ENCODE measurements at regions of chr12 and their contacts with region 1.

Region 1: DNA sequence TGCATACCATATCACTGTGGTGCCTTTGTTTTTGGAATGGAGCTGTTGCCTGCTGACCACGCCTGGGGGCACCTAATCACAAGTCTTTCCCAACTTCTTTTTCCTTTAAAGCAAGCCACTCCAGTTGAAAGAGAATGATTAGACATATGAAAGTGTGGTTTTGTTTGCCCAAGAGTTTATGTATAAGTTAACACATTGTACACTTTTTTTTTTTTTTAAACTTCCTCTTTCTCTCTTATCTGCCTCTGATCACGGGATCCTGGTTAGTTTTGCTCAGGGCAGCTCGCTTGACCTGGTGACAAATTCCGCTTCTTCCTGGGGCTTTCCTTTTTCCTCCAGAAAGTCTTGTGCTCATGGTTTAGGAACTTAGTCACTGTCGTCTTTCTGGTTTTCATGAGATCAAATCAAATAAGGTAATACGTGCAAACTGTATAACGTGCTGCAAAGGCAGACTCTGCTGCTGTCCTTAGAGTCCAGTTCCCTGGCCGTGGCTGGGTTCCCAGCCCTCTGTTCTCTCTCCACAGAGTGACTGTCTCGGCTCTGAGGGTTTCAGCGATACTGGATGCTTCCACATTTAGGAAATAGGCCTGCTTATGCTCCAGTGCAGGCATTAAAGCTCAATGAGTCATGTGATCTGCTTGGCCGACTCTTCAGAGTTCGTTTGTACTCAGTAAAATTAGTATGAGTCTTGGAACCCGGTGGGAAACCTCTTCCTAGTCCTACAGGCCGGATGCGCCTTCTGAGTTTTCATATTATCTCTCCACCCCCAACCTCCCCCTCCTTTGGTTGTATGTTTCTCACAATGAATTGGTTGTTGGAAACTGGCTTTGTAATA is 15.2 kb downstream of the RASSF3 start:
- DNase-seq: peak; percentile 58 to 70
- H3K4me3 ChIP-seq: peak overlapping the region; percentile 13
- H3K4me3 Mint-ChIP-seq: peak overlapping the region; percentile 68
- H3K27ac Mint-ChIP-seq: peak overlapping the region; percentile 82
- H3K4me1 ChIP-seq: peaks cover 19% of the 10 kb centered on the region
- H3K4me1 Mint-ChIP-seq: peaks cover 15% of the 10 kb centered on the region
- H3K27me3 ChIP-seq: no peaks in the 10 kb centered on the region
- H3K27me3 Mint-ChIP-seq: no peaks in the 10 kb centered on the region
- CTCF ChIP-seq: no peak

Region 2: GRCh38 chr12:64451687-64452558 is 173.5 kb before region 1 on chr12 and contains the start of gene TBK1:
- CTCF ChIA-PET with region 1: no interaction called
- POLR2A ChIA-PET with region 1: no interaction called
- intact Hi-C with region 1: loop called (anchors 10 kb)
- DNase-seq: peak; percentile 91 to 94
- H3K4me3 ChIP-seq: peak within 1 kb of the TSS; percentile 98
- H3K4me3 Mint-ChIP-seq: peak within 1 kb of the TSS; percentile 83
- H3K27ac Mint-ChIP-seq: peak within 1 kb of the TSS; percentile 86
- H3K4me1 ChIP-seq: peaks cover 4% of the 10 kb centered on the region; the same call in 1 of the 2 replicates
- H3K4me1 Mint-ChIP-seq: peaks cover 15% of the 10 kb centered on the region
- H3K27me3 ChIP-seq: no peaks in the 10 kb centered on the region
- H3K27me3 Mint-ChIP-seq: no peaks in the 10 kb centered on the region
- CTCF ChIP-seq: no peak
- total RNA-seq, gene TBK1: 21.6 and 23.2 TPM in 2 replicates

Region 3: DNA sequence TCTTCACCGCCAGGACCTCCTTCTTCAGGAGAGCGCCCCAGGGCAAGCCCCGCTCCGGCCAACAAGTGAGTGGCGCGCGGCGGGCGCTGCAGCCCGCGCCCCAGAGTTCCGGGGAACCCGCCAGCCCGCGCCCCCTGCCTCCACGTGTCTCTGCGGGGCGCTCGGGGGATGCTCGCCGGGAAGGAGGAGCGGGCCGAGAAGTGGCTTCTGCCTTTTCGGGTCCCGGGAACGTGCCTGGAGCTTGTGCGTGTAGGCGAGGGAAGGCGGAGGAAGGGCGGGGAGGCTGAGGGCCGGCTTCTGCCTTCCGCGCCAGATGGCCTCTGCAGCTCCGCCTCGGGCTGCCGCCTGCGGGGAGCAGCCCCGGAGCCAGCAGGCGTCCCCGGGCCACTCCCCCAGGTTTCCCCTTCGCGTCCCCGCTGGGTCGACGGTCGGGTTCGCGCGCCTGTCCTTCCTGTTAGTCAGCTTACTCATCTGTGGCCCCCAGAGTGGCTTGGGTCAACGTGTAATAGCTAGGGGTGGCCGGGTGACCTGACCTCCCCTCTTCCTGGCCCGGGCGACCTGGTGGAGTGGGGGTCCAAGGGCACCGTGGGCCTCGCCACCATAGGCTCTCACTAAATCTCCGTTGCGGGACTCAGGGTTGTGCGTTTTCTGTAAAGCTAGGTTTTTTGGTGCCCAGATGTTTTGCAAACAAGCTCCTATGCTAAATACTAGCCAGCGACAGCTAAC is 14.6 kb before region 1 on chr12:
- CTCF ChIA-PET with region 1: no interaction called
- POLR2A ChIA-PET with region 1: interaction called, 8 read pairs
- intact Hi-C with region 1: loop called (anchors 1 kb)
- DNase-seq: peak; percentile 67 to 69
- H3K4me3 ChIP-seq: peak overlapping the region; percentile 95
- H3K4me3 Mint-ChIP-seq: peak overlapping the region; percentile 80
- H3K27ac Mint-ChIP-seq: peak overlapping the region; percentile 39
- H3K4me1 ChIP-seq: peaks cover 5% of the 10 kb centered on the region; the same call in 1 of the 2 replicates
- H3K4me1 Mint-ChIP-seq: peaks cover 7% of the 10 kb centered on the region
- H3K27me3 ChIP-seq: no peaks in the 10 kb centered on the region
- H3K27me3 Mint-ChIP-seq: no peaks in the 10 kb centered on the region
- CTCF ChIP-seq: no peak

Region 4: DNA sequence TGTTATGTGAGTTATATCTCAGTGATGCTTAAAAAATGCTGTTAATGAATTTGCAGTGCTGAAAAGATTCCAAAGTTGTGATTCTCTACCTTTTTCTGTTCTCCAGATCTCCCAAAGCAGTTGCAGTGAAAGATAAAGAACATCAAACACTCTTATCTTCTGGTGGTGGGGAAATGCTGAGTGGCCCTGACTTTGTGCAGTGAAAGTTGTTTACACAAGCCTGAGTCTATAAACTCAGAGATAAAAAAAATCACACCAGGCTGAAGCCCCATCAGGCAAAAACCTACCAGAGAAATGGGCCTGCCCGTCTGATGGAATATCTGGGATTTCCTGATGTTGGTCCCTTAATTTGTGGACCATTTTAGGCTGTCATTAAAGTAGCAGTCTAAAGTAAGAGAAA is 31.0 kb after region 1 on chr12:
- CTCF ChIA-PET with region 1: no interaction called
- POLR2A ChIA-PET with region 1: no interaction called
- intact Hi-C with region 1: loop called (anchors 1 kb)
- DNase-seq: peak; percentile 65 to 69
- H3K4me3 ChIP-seq: no peak overlapping the region
- H3K4me3 Mint-ChIP-seq: peak overlapping the region; percentile 12
- H3K27ac Mint-ChIP-seq: peak overlapping the region; percentile 36
- H3K4me1 ChIP-seq: peaks cover 46% of the 10 kb centered on the region
- H3K4me1 Mint-ChIP-seq: peaks cover 18% of the 10 kb centered on the region
- H3K27me3 ChIP-seq: no peaks in the 10 kb centered on the region
- H3K27me3 Mint-ChIP-seq: no peaks in the 10 kb centered on the region
- CTCF ChIP-seq: no peak

Region 5: DNA sequence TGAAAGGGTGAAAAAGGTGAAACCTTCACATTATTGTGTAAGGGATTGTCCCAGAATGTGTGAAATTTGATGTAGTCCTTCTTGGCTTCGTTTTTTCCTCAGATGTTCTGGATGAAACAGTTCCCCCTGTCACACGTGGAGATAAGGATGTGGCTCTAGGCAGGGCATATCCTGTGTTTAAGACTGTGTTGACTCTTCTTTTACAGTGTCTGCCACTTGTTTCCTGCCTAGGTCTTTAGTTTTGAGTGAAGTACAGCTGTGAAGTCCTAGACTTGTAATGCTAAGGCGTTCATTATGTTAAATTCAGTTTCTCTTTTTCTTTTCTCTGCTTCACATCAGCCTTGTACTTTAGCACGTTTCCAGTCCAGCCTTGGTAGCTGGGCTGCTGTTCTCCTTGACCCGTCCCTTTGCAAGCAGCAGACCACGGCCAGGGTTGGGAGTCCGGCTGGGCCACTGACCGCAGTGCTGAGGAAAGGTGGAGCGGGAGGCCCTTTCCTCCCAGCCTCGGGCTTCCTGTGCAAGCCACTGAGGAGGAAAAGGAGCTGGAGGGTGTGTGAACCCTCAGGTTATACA is 43.9 kb after region 1 on chr12:
- CTCF ChIA-PET with region 1: no interaction called
- POLR2A ChIA-PET with region 1: no interaction called
- intact Hi-C with region 1: loop called (anchors 1 kb)
- DNase-seq: peak in 1 of 2 experiments; percentile 45
- H3K4me3 ChIP-seq: no peak overlapping the region
- H3K4me3 Mint-ChIP-seq: peak overlapping the region; percentile 27
- H3K27ac Mint-ChIP-seq: peak overlapping the region; percentile 57
- H3K4me1 ChIP-seq: peaks cover 91% of the 10 kb centered on the region
- H3K4me1 Mint-ChIP-seq: peaks cover 59% of the 10 kb centered on the region
- H3K27me3 ChIP-seq: no peaks in the 10 kb centered on the region
- H3K27me3 Mint-ChIP-seq: no peaks in the 10 kb centered on the region
- CTCF ChIP-seq: no peak

Region 6: DNA sequence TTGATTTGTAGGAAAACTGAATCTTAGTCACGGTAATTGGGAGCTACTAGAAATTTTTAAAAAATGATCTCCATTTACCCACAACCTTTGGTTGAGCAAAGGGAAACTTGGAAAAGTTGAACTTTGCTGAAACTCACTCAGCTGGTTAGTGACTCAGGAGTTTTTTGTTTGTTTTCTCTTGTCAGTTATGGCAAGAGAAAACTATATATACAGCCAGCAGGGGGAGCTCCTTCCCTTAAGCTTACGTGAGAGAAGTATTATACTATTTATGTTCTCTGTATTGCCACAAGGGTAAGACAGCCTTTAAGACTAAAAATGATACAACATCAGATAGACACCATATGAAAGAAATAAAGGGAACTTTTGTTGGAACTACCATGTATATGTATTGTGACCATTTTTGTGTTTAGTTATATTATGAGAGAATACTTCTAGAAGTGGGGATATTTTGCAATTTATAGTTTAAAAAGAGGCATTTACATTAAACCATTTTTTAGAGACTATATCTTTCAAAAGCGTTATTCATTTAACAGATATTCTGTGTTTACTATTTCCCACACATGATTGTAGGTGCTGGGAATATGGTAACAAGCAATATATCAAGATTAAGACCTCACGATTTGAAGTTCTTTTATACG is 170.9 kb after region 1 on chr12:
- CTCF ChIA-PET with region 1: no interaction called
- POLR2A ChIA-PET with region 1: no interaction called
- intact Hi-C with region 1: no loop called
- DNase-seq: peak; percentile 76 to 85
- H3K4me3 ChIP-seq: no peak overlapping the region
- H3K4me3 Mint-ChIP-seq: no peak overlapping the region
- H3K27ac Mint-ChIP-seq: no peak overlapping the region
- H3K4me1 ChIP-seq: peaks cover 39% of the 10 kb centered on the region
- H3K4me1 Mint-ChIP-seq: peaks cover 45% of the 10 kb centered on the region
- H3K27me3 ChIP-seq: no peaks in the 10 kb centered on the region
- H3K27me3 Mint-ChIP-seq: no peaks in the 10 kb centered on the region
- CTCF ChIP-seq: peak; percentile 62 to 76